ENCODE measurements at regions of chr2 and their contacts with region 1.

Region 1: GRCh38 chr2:16525265-16525887 is 140.3 kb downstream of the CYRIA start:
- H3K4me3 Mint-ChIP-seq: no peak overlapping the region
- H3K27ac Mint-ChIP-seq: no peak overlapping the region
- H3K4me1 Mint-ChIP-seq: no peaks in the 10 kb centered on the region
- H3K27me3 Mint-ChIP-seq: peaks cover 5% of the 10 kb centered on the region

Region 2: GRCh38 chr2:15808204-15808910 is 717.0 kb before region 1 on chr2:
- intact Hi-C with region 1: no loop called
- H3K4me3 Mint-ChIP-seq: no peak overlapping the region
- H3K27ac Mint-ChIP-seq: no peak overlapping the region
- H3K4me1 Mint-ChIP-seq: no peaks in the 10 kb centered on the region
- H3K27me3 Mint-ChIP-seq: no peaks in the 10 kb centered on the region

Region 3: DNA sequence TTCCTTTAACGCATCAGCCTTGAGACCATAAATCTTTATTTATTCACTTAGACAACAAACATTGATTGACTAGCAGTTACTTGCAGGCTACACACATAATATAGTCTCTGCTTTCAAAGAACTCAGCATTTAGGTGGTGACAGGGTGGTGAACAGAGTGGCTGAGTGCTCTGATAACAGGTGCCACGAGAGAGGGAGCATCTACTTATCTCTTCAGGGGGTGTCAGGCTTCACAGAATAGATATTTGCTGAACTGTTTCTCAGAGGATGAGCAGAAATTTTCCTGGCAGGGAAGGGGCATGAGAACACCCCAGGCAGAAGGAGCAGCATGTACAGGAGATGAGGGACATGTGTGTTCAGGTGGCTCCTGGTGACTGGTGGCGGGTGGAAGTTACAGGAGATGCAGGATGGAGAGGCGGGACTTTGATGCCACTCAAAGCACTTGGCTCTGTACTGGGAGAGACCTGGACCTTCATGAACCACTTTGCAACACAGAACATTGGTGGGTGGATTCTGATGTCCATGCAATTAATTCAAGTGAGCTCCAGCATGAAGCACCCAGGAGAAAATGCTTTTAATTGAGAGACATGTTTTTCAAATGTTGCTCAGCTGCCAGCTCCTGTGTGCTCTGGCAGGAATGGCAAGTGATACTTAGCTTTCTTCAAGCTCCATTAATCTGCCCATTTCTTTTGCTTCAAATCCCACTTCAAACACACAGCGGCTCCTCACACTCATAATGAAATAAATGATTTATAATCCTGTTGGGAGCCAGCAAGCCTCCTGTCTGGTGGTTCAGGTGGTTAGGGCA is 336.1 kb before region 1 on chr2:
- intact Hi-C with region 1: no loop called
- H3K4me3 Mint-ChIP-seq: no peak overlapping the region
- H3K27ac Mint-ChIP-seq: no peak overlapping the region
- H3K4me1 Mint-ChIP-seq: no peaks in the 10 kb centered on the region
- H3K27me3 Mint-ChIP-seq: no peaks in the 10 kb centered on the region

Region 4: DNA sequence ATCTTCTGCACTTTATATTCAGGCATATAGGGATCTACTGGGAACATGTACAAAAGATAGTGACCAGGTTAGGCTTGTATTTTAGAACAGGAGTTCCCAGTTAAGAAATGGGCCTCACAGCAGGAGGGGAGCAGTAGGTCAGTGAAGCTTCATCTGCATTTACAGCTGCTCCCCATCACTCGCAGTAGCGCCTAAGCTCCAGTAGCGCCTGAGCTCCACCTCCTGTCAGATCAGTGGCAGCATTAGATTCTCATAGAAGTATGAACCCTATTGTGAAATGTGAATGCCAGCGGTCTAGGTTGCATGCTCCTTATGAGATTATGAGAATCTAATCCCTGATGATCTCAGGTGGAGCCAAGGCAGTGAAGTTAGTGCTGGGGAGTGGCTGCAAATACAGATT is 364.7 kb after region 1 on chr2:
- intact Hi-C with region 1: loop called (anchors 10 kb)
- H3K4me3 Mint-ChIP-seq: no peak overlapping the region
- H3K27ac Mint-ChIP-seq: no peak overlapping the region
- H3K4me1 Mint-ChIP-seq: no peaks in the 10 kb centered on the region
- H3K27me3 Mint-ChIP-seq: no peaks in the 10 kb centered on the region